AG04450 (cell line): ENCODE measurements at regions of chr22 and their contacts with region 1.

Region 1: GRCh38 chr22:43993027-43993760 is 30.9 kb upstream of the PARVB start:
- DNase-seq: peak; percentile 30
- H3K4me3 ChIP-seq: no peak overlapping the region
- H3K27ac ChIP-seq: no peak overlapping the region
- H3K27me3 ChIP-seq: no peaks in the 10 kb centered on the region
- CTCF ChIP-seq: peak; percentile 98

Region 2: GRCh38 chr22:43972931-43973462 is 20.2 kb before region 1 on chr22:
- CTCF ChIA-PET with region 1: interaction called, 12 read pairs
- POLR2A ChIA-PET with region 1: no interaction called
- DNase-seq: no peak
- H3K4me3 ChIP-seq: no peak overlapping the region
- H3K27ac ChIP-seq: no peak overlapping the region
- H3K27me3 ChIP-seq: no peaks in the 10 kb centered on the region
- CTCF ChIP-seq: no peak

Region 3: DNA sequence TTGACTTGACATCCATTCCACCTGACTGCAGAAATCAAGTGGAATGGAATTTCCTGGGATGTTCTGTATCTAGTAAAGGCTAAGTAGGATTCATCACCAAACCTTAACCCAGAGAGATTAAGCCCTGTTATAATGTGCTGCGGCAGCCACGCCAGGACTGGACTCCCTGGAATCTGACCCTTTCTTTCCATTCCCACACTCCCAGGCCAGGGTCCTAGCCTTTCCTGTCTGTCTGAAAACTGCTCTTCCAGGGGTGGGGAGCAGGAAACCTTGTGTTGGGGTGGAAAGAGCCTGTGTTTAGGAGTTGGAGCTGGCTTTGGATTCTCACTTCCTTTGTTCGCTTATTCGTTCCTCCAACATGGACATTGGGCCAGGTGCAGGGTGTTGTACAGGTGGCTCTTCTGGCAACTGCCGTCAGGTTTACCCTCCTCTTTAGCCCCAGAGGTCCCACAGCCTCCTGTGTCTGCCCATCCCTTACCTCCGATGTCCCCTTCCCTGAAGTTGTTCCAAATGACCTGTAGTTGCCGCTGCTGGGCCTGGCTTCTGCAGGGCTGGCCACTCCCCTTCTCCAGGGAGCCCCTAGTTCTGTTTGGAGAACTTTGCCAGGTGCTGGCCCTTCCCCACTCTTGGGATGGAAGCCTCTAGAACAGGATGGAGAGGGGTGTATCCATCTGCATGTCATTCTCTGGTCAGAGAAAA is 10.4 kb after region 1 on chr22:
- CTCF ChIA-PET with region 1: interaction called, 25 read pairs
- POLR2A ChIA-PET with region 1: no interaction called
- DNase-seq: no peak
- H3K4me3 ChIP-seq: no peak overlapping the region
- H3K27ac ChIP-seq: no peak overlapping the region
- H3K27me3 ChIP-seq: no peaks in the 10 kb centered on the region
- CTCF ChIP-seq: peak; percentile 25; the same call in 1 of the 2 replicates

Region 4: DNA sequence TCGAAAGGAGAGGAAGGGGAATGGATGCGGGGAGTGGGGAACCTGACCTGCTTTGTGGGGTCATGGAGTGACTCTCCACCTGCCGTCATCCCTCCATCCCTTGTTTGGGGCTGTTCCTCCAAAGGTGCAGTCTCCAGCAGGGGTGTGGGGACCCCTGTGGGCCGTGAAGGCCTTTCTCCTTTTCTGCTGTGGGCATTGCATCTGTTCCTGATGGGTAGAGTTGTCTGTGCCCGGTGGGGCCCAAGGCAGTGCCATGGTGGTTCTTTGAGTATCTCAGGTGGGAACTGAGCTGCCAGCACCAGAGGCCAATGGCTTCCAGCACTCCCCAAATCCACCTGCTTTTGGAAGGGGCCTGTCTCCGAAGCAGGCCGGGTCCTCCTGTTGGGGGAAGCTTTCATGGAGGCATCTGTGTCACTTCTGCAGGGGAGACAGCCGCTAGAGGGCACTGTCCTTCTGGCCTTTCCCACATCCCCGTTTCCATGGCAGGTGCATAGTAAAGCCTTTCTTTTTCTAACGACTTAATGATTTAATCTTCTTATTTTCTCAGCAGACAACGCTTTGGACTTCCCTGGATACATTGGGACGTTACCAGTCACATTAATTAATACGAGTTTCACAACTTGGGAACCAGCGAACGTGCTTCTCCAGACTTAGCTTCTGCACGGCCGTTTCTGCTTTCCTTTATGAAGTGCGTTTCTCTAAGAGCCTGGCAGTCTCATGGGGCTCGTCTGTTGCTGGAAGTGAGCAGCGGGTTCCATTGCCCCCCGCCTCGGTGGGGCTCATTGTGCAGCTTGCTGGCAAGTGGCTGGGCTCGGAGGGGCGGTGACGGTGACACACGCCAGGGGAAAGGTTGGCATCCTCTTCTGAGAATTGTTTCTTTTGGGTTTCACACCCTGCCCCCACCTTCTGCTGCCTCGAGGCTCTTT is 88.0 kb after region 1 on chr22:
- CTCF ChIA-PET with region 1: interaction called, 110 read pairs
- POLR2A ChIA-PET with region 1: no interaction called
- DNase-seq: peak; percentile 44
- H3K4me3 ChIP-seq: no peak overlapping the region
- H3K27ac ChIP-seq: no peak overlapping the region
- H3K27me3 ChIP-seq: no peaks in the 10 kb centered on the region
- CTCF ChIP-seq: peak; percentile 94

Region 5: GRCh38 chr22:44325718-44326490 is 332.7 kb after region 1 on chr22:
- CTCF ChIA-PET with region 1: interaction called, 12 read pairs
- POLR2A ChIA-PET with region 1: no interaction called
- DNase-seq: no peak
- H3K4me3 ChIP-seq: peak overlapping the region; percentile 68
- H3K27ac ChIP-seq: no peak overlapping the region
- H3K27me3 ChIP-seq: peaks cover 13% of the 10 kb centered on the region
- CTCF ChIP-seq: peak; percentile 62

Region 6: DNA sequence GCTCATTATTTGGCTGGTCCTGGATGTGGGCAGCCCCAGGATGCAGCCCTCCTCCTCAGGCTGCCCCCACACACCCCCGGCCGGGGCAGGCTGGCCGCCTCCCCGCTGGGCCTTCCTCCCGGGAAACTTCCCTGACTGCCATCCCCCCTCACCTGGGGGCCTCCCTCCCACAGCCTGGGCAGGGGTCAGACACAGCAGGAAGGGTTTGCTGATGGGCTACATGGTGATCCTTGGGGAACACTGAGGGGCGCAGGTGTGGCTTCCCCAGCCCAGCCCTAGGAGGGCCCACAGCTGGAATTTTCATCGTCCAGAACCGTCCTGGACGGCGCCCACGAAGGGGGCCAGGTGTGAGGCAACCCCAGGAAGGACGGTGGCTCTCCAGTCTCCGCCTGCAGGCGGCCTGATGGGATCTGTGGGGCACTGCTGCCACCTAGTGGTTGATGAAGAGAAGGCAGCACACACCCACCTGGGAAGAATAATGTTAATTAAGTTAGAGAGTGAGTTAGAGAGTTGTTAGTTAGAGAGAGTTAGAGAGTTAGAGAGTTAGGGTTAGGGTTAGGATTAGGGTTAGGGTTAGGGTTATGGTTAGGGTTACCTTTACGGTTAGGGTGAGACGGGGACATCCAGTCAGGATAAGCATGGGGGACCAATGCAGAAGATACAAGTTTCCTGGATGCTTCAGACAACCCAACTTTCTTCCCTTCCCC is 632.9 kb after region 1 on chr22:
- CTCF ChIA-PET with region 1: interaction called, 143 read pairs
- POLR2A ChIA-PET with region 1: interaction called, 3 read pairs
- DNase-seq: no peak
- H3K4me3 ChIP-seq: no peak overlapping the region
- H3K27ac ChIP-seq: no peak overlapping the region
- H3K27me3 ChIP-seq: peaks cover 10% of the 10 kb centered on the region
- CTCF ChIP-seq: peak; percentile 97

Region 7: GRCh38 chr22:44684506-44685383 is 691.6 kb after region 1 on chr22:
- CTCF ChIA-PET with region 1: interaction called, 10 read pairs
- POLR2A ChIA-PET with region 1: no interaction called
- DNase-seq: peak; percentile 83
- H3K4me3 ChIP-seq: no peak overlapping the region
- H3K27ac ChIP-seq: peak overlapping the region; percentile 70
- H3K27me3 ChIP-seq: no peaks in the 10 kb centered on the region
- CTCF ChIP-seq: peak; percentile 100